Activated CD4-positive, alpha-beta T cell treated with anti-CD3 and anti-CD28 coated beads for 36 hours (primary cell): ENCODE measurements at regions of chr14 and their contacts with region 1.

Region 1: GRCh38 chr14:51283402-51284085 is 43.5 kb downstream of the TMX1 start:
- DNase-seq: no peak
- ATAC-seq: no peak
- H3K4me3 Mint-ChIP-seq: no peak overlapping the region
- H3K27ac Mint-ChIP-seq: no peak overlapping the region
- H3K4me1 Mint-ChIP-seq: no peaks in the 10 kb centered on the region
- H3K27me3 Mint-ChIP-seq: no peaks in the 10 kb centered on the region

Region 2: DNA sequence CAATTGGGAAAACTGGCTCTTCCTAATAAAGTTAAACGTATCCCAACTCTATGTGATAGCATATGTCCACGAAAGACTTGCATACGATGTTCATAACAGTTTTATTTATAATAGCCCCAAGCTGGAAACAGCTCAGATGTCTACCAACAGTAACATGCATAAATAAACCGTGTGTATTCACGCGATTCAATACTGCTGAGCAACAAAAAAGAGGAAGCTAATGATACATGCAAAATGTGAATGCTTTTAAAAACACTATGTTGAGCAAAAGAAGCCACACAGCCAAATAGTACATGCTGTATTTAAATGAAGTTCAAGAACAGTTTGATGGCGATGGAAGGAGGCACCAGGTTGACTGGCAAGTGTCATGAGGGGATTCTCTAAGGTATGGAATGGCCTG is 244.3 kb before region 1 on chr14:
- CTCF ChIA-PET with region 1: no interaction called
- POLR2A ChIA-PET with region 1: no interaction called
- intact Hi-C with region 1: no loop called
- DNase-seq: no peak
- ATAC-seq: no peak
- H3K4me3 Mint-ChIP-seq: no peak overlapping the region
- H3K27ac Mint-ChIP-seq: no peak overlapping the region
- H3K4me1 Mint-ChIP-seq: no peaks in the 10 kb centered on the region
- H3K27me3 Mint-ChIP-seq: no peaks in the 10 kb centered on the region

Region 3: DNA sequence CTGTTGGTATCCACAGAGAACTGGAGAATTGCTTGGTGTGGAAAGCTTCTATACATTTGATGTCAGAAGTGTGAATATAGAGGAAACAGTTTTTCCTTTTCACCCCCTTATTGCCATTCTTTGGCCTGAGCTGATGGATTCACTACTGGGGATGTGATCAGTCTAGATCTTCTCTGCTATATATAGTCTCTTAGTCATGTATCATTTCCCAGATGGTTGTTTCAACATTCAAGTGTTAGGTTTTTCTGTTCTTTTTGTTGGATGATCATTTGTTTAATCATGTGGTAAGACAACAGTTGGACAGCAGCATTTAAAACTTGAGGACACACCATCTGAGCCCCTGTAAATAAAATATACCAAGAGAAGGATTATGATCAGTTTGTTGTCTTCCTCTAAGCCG is 13.9 kb before region 1 on chr14:
- CTCF ChIA-PET with region 1: interaction called, 16 read pairs
- POLR2A ChIA-PET with region 1: no interaction called
- intact Hi-C with region 1: no loop called
- DNase-seq: no peak
- ATAC-seq: no peak
- H3K4me3 Mint-ChIP-seq: no peak overlapping the region
- H3K27ac Mint-ChIP-seq: no peak overlapping the region
- H3K4me1 Mint-ChIP-seq: peaks cover 2% of the 10 kb centered on the region
- H3K27me3 Mint-ChIP-seq: no peaks in the 10 kb centered on the region

Region 4: DNA sequence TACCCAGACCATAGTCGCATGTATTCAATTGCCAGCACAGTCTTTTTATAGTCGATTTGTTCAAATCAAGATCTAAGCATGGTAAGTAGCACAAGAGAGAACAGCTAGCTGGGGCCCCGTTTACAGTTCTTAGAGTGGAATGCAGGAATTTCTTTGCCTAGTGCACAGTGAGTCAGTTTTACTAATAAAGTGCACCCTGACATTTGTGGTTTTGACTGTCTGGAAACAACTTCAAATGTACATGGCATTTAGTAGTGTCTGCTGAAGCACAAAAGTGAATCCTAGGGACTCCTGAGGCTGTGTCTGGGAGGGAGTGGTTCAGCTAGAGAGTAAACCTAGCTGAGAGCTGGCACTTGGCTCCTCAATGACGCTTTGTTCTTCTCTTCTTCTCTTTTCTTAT is 21.4 kb after region 1 on chr14:
- CTCF ChIA-PET with region 1: interaction called, 11 read pairs
- POLR2A ChIA-PET with region 1: no interaction called
- intact Hi-C with region 1: no loop called
- DNase-seq: peak; percentile 10
- ATAC-seq: peak; percentile 80
- H3K4me3 Mint-ChIP-seq: no peak overlapping the region
- H3K27ac Mint-ChIP-seq: no peak overlapping the region
- H3K4me1 Mint-ChIP-seq: peaks cover 15% of the 10 kb centered on the region
- H3K27me3 Mint-ChIP-seq: peaks cover 10% of the 10 kb centered on the region